ENCODE measurements at regions of chr12 and their contacts with region 1.

Region 1: DNA sequence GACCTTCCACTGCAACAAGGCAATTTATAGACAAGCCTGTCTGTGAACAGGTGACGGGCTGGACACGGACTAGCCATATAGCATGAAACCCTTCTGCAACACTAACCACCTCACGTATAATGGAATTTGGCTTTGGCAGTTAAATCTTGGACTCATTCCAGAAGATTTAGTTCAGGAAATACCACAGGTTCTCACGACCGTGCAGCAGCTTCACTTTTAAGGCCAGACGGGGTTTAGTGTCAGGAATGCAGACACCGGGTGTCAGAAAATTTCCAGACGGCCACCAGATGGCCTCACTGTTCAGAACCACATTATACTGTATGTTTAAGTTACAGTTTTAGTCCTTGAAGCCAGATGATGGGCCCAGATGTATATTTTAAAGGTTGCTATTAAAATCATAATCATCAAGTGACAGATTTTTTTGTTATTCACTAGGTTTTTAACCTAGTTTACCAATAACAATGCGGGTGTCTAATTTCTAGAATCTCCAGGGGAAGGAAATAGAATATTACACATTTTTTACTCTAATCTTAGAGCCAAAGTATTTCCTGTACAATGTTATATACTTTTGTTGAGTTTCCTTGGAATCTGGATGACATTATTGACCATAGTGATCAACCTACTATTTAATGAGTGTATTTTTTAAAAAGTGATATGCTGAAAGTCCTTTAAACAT is 90.5 kb upstream of the TMPO start:
- DNase-seq: peak; percentile 95
- H3K4me3 Mint-ChIP-seq: no peak overlapping the region
- H3K27ac Mint-ChIP-seq: no peak overlapping the region
- H3K4me1 Mint-ChIP-seq: peaks cover 16% of the 10 kb centered on the region
- H3K27me3 Mint-ChIP-seq: no peaks in the 10 kb centered on the region
- CTCF ChIP-seq: peak; percentile 74

Region 2: DNA sequence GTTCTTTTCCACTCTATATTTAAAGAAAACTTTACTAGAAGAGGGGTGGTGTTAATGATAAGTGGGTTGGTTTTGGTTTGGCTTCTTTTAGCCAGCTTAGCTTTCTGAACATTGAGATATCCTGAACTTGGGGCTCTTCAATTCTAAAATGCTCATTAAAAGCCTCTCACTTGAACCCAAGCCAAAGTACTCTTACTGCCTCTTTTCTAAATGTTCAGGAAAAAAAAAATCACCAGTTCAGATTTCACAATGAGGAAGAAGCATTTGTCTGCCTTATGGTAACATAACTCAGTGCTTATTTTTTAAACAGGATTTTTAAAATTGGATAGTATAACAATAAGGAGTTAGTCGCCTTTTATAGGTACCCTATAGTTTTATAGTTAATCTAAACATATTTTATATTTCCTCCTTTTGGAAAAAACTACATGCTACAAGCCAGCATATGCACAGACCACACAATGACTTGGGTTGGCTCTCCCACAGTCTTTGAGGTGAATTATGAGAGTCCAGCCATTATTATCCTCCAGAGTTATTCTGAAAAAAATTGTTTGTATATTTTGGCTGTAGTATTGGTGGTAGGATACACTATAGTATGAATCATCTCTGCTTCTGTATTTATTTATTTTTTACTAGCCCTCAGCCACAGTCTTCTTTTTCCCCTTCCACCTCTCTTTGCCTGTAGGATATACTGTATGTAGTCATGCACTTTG is 105.0 kb before region 1 on chr12:
- CTCF ChIA-PET with region 1: no interaction called
- POLR2A ChIA-PET with region 1: no interaction called
- intact Hi-C with region 1: no loop called
- DNase-seq: peak; percentile 32
- H3K4me3 Mint-ChIP-seq: no peak overlapping the region
- H3K27ac Mint-ChIP-seq: no peak overlapping the region
- H3K4me1 Mint-ChIP-seq: no peaks in the 10 kb centered on the region
- H3K27me3 Mint-ChIP-seq: peaks cover 49% of the 10 kb centered on the region
- CTCF ChIP-seq: no peak

Region 3: DNA sequence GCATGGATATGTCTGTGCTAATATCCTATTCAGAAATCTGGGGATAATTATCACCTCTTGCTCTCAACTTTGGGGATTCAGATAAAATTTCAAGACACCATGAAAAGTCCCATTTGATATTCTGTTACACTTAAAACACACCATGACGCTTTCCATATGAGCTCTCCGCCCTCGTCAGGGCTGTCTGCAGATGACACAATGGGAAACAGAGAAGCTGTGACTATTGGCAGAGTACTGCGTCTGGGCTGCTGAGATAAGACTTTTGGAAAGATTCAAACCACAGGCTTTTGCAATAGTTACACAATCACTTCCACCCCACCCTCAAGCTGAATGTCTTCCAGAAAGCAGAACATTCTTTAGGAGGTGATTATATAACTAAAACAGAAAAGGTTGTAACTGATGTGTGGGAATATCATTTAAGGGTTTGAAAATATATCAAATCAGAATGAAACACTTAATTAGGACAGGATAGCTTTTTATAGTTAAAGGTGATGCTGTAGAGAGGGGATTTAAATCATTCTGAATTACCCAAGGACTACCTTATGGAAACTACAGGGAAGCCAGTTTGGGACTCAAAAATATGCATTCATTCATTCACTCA is 15.2 kb after region 1 on chr12:
- CTCF ChIA-PET with region 1: interaction called, 52 read pairs
- POLR2A ChIA-PET with region 1: interaction called, 11 read pairs
- intact Hi-C with region 1: loop called (anchors 2 kb)
- DNase-seq: peak; percentile 96
- H3K4me3 Mint-ChIP-seq: peak overlapping the region; percentile 39
- H3K27ac Mint-ChIP-seq: peak overlapping the region; percentile 19
- H3K4me1 Mint-ChIP-seq: peaks cover 10% of the 10 kb centered on the region
- H3K27me3 Mint-ChIP-seq: no peaks in the 10 kb centered on the region
- CTCF ChIP-seq: no peak

Region 4: GRCh38 chr12:98470469-98471082 is 45.7 kb after region 1 on chr12:
- CTCF ChIA-PET with region 1: interaction called, 5 read pairs
- POLR2A ChIA-PET with region 1: no interaction called
- intact Hi-C with region 1: loop called (anchors 2 kb)
- DNase-seq: peak; percentile 71
- H3K4me3 Mint-ChIP-seq: no peak overlapping the region
- H3K27ac Mint-ChIP-seq: peak overlapping the region; percentile 26
- H3K4me1 Mint-ChIP-seq: peaks cover 31% of the 10 kb centered on the region
- H3K27me3 Mint-ChIP-seq: no peaks in the 10 kb centered on the region
- CTCF ChIP-seq: no peak

Region 5: GRCh38 chr12:98516184-98516873 is 91.5 kb after region 1 on chr12:
- CTCF ChIA-PET with region 1: interaction called, 15 read pairs
- POLR2A ChIA-PET with region 1: interaction called, 25 read pairs
- intact Hi-C with region 1: loop called (anchors 1 kb)
- DNase-seq: peak; percentile 93
- H3K4me3 Mint-ChIP-seq: peak overlapping the region; percentile 96
- H3K27ac Mint-ChIP-seq: peak overlapping the region; percentile 61
- H3K4me1 Mint-ChIP-seq: peaks cover 20% of the 10 kb centered on the region
- H3K27me3 Mint-ChIP-seq: no peaks in the 10 kb centered on the region
- CTCF ChIP-seq: peak; percentile 78

Region 6: DNA sequence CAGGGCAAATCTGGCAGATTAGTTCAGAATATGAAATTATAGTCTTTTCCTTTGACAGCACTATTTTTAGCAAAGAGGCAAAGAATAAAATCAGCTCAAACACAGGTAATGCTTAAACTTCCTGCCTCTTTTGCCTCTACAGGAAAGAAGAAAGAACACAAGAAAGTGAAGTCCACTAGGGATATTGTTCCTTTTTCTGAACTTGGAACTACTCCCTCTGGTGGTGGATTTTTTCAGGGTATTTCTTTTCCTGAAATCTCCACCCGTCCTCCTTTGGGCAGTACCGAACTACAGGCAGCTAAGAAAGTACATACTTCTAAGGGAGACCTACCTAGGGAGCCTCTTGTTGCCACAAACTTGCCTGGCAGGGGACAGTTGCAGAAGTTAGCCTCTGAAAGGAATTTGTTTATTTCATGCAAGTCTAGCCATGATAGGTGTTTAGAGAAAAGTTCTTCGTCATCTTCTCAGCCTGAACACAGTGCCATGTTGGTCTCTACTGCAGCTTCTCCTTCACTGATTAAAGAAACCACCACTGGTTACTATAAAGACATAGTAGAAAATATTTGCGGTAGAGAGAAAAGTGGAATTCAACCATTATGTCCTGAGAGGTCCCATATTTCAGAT is 107.9 kb after region 1 on chr12:
- CTCF ChIA-PET with region 1: interaction called, 13 read pairs
- POLR2A ChIA-PET with region 1: no interaction called
- intact Hi-C with region 1: no loop called
- DNase-seq: peak; percentile 70
- H3K4me3 Mint-ChIP-seq: no peak overlapping the region
- H3K27ac Mint-ChIP-seq: no peak overlapping the region
- H3K4me1 Mint-ChIP-seq: no peaks in the 10 kb centered on the region
- H3K27me3 Mint-ChIP-seq: no peaks in the 10 kb centered on the region
- CTCF ChIP-seq: peak; percentile 62